PC-3 (cell line): ENCODE measurements at regions of chr11 and their contacts with region 1.

Region 1: DNA sequence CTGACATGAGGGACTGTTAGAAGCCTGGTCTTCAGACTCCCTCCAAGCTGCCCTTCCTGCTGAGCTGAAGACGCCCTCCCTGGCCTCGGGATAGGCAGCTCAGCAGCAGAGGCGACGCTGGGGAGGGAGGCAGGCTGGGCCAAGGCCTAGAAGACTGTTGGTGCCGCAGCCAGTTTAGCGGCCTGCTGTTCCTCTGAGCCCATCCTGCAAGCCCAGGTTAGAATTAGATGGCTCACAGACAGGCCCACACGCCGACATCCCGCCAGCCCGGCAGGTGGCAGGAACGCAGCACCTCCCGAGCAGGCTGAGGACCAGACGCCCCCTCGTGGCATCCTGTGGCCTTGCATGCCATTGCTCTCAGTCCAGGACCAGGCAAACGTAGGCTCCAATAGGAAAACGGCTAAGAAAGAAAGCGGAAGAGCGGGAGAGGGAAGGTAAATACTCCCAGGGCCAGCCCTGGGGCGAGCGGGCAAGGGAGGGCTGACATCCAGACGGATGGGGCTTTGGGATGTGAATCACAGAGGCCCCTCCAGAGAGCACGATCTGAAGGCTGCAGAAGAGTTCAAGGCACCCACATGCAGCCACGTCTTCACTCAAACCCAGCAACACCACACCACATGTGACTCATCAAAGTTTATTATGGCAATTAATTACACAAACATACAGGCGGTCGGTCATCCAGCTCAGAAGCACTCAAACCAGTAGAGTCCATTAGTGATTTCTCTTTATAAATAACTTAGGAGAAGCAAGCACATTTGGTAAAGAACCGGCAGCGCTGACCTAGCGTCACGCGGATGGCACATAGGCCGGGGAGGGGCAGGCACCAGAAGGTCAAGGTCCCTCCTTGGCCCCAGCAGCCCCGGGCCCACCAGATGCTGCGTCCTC is 27.6 kb downstream of the CD5 start:
- DNase-seq: peak; percentile 97
- ATAC-seq: peak; percentile 89
- H3K4me3 ChIP-seq: peak overlapping the region; percentile 51
- H3K27ac ChIP-seq: peak overlapping the region; percentile 48
- H3K4me1 ChIP-seq: peaks cover 17% of the 10 kb centered on the region
- H3K27me3 ChIP-seq: no peaks in the 10 kb centered on the region
- CTCF ChIP-seq: peak; percentile 100

Region 2: GRCh38 chr11:60831143-60831500 is 298.8 kb before region 1 on chr11:
- CTCF ChIA-PET with region 1: no interaction called
- POLR2A ChIA-PET with region 1: no interaction called
- intact Hi-C with region 1: loop called (anchors 2 kb)
- DNase-seq: peak; percentile 95
- ATAC-seq: peak; percentile 73
- H3K4me3 ChIP-seq: peak overlapping the region; percentile 43
- H3K27ac ChIP-seq: peak overlapping the region; percentile 80
- H3K4me1 ChIP-seq: peaks cover 38% of the 10 kb centered on the region
- H3K27me3 ChIP-seq: no peaks in the 10 kb centered on the region
- CTCF ChIP-seq: peak; percentile 100

Region 3: GRCh38 chr11:60970369-60970774 is 159.5 kb before region 1 on chr11:
- CTCF ChIA-PET with region 1: no interaction called
- POLR2A ChIA-PET with region 1: no interaction called
- intact Hi-C with region 1: loop called (anchors 1 kb)
- DNase-seq: peak; percentile 75
- ATAC-seq: peak; percentile 89
- H3K4me3 ChIP-seq: no peak overlapping the region
- H3K27ac ChIP-seq: no peak overlapping the region
- H3K4me1 ChIP-seq: no peaks in the 10 kb centered on the region
- H3K27me3 ChIP-seq: peaks cover 38% of the 10 kb centered on the region
- CTCF ChIP-seq: peak; percentile 96

Region 4: GRCh38 chr11:61161190-61162091 is 31.6 kb after region 1 on chr11 and contains the start of gene VPS37C:
- CTCF ChIA-PET with region 1: interaction called, 3 read pairs
- POLR2A ChIA-PET with region 1: no interaction called
- intact Hi-C with region 1: loop called (anchors 2 kb)
- DNase-seq: peak; percentile 94
- ATAC-seq: peak; percentile 81
- H3K4me3 ChIP-seq: peak within 1 kb of the TSS; percentile 78
- H3K27ac ChIP-seq: peak within 1 kb of the TSS; percentile 82
- H3K4me1 ChIP-seq: peaks cover 41% of the 10 kb centered on the region
- H3K27me3 ChIP-seq: no peaks in the 10 kb centered on the region
- CTCF ChIP-seq: no peak
- total RNA-seq, gene VPS37C: 28.9 and 34.9 TPM in 2 replicates

Region 5: DNA sequence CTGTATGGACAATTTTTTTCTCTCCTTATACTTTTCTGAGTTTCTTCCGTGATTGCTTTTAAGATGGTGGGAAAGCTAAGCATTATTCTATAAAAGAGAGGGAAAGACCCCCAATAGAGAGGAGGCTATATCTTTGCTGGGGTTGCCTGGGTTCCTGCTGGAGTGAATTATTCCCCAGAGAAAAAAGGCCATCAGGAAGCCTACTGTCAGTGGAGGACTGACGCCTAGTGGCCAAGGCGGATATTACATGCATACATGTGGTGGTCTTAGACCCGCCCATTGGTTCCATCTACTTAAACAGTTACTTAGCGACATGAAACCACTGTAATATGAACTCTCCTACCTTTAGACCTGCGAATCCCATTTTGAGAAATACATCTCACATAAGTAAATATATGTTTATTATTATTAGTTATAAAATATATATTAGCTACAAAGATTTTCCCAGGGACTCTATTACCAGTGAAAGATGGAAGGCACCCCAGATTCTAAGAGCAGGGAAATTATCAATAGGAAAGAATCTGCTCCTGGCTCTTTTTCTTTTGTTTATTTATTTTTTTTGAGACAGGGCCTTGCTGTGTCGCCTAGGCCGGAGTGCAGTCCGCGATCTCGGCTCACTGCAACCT is 57.7 kb after region 1 on chr11:
- CTCF ChIA-PET with region 1: no interaction called
- POLR2A ChIA-PET with region 1: no interaction called
- intact Hi-C with region 1: loop called (anchors 1 kb)
- DNase-seq: peak; percentile 91
- ATAC-seq: peak; percentile 87
- H3K4me3 ChIP-seq: no peak overlapping the region
- H3K27ac ChIP-seq: no peak overlapping the region
- H3K4me1 ChIP-seq: no peaks in the 10 kb centered on the region
- H3K27me3 ChIP-seq: no peaks in the 10 kb centered on the region
- CTCF ChIP-seq: peak; percentile 94